ENCODE measurements at regions of chr17 and their contacts with region 1.

Region 1: GRCh38 chr17:38868817-38869525 is 887 bp upstream of the LASP1 start:
- DNase-seq: peak; percentile 88
- H3K4me3 ChIP-seq: peak overlapping the region; percentile 74 to 93 (median 84)
- H3K27ac ChIP-seq: peak overlapping the region; percentile 24
- H3K4me1 ChIP-seq: peaks cover 38% of the 10 kb centered on the region
- H3K27me3 ChIP-seq: no peaks in the 10 kb centered on the region
- CTCF ChIP-seq: peak in 1 of 2 donors; percentile 17
- POLR2A ChIP-seq: no peak

Region 2: GRCh38 chr17:38557836-38558727 is 310.9 kb before region 1 on chr17:
- CTCF ChIA-PET with region 1: no interaction called
- POLR2A ChIA-PET with region 1: no interaction called
- dilution Hi-C with region 1: no loop called
- intact Hi-C with region 1: no loop called
- DNase-seq: peak; percentile 89
- H3K4me3 ChIP-seq: peak overlapping the region in 1 of 3 experiments; percentile 18
- H3K27ac ChIP-seq: no peak overlapping the region
- H3K4me1 ChIP-seq: peaks cover 13% of the 10 kb centered on the region
- H3K27me3 ChIP-seq: peaks cover 45 to 58% of the 10 kb centered on the region in 2 experiments
- CTCF ChIP-seq: peak; percentile 94 to 98
- POLR2A ChIP-seq: no peak

Region 3: GRCh38 chr17:38637951-38638350 is 231.0 kb before region 1 on chr17:
- CTCF ChIA-PET with region 1: no interaction called
- POLR2A ChIA-PET with region 1: no interaction called
- dilution Hi-C with region 1: no loop called
- intact Hi-C with region 1: no loop called
- DNase-seq: no peak
- H3K4me3 ChIP-seq: no peak overlapping the region
- H3K27ac ChIP-seq: no peak overlapping the region
- H3K4me1 ChIP-seq: no peaks in the 10 kb centered on the region
- H3K27me3 ChIP-seq: peaks cover 0 to 9% of the 10 kb centered on the region in 2 experiments
- CTCF ChIP-seq: no peak
- POLR2A ChIP-seq: no peak

Region 4: GRCh38 chr17:38752119-38752929 is 116.6 kb before region 1 on chr17 and contains the start of gene PSMB3:
- CTCF ChIA-PET with region 1: interaction called, 4 read pairs
- POLR2A ChIA-PET with region 1: interaction called, 3 read pairs
- dilution Hi-C with region 1: no loop called
- intact Hi-C with region 1: loop called (anchors 1 kb)
- DNase-seq: peak; percentile 99
- H3K4me3 ChIP-seq: peak within 1 kb of the TSS; percentile 59 to 82 (median 73)
- H3K27ac ChIP-seq: peak within 1 kb of the TSS; percentile 40
- H3K4me1 ChIP-seq: peaks cover 34% of the 10 kb centered on the region
- H3K27me3 ChIP-seq: no peaks in the 10 kb centered on the region
- CTCF ChIP-seq: no peak
- POLR2A ChIP-seq: peak; percentile 3
- total RNA-seq, gene PSMB3: 213 and 227 TPM in 2 replicates

Region 5: GRCh38 chr17:38853292-38854219 is 15.4 kb before region 1 on chr17 and contains the start of gene RPL23:
- CTCF ChIA-PET with region 1: interaction called, 20 read pairs
- POLR2A ChIA-PET with region 1: interaction called, 28 read pairs
- dilution Hi-C with region 1: no loop called
- intact Hi-C with region 1: loop called (anchors 1 kb)
- DNase-seq: peak; percentile 98
- H3K4me3 ChIP-seq: peak within 1 kb of the TSS; percentile 82 to 93 (median 91)
- H3K27ac ChIP-seq: peak within 1 kb of the TSS; percentile 84
- H3K4me1 ChIP-seq: peaks cover 19% of the 10 kb centered on the region
- H3K27me3 ChIP-seq: no peaks in the 10 kb centered on the region
- CTCF ChIP-seq: no peak
- POLR2A ChIP-seq: peak; percentile 97
- total RNA-seq, gene RPL23: 1,270 and 1,292 TPM in 2 replicates

Region 6: GRCh38 chr17:38898812-38899348 is 29.9 kb after region 1 on chr17:
- CTCF ChIA-PET with region 1: interaction called, 18 read pairs
- POLR2A ChIA-PET with region 1: interaction called, 8 read pairs
- dilution Hi-C with region 1: no loop called
- intact Hi-C with region 1: loop called (anchors 1 kb)
- DNase-seq: peak; percentile 41
- H3K4me3 ChIP-seq: no peak overlapping the region
- H3K27ac ChIP-seq: peak overlapping the region; percentile 51
- H3K4me1 ChIP-seq: peaks cover 60% of the 10 kb centered on the region
- H3K27me3 ChIP-seq: no peaks in the 10 kb centered on the region
- CTCF ChIP-seq: no peak
- POLR2A ChIP-seq: no peak

Region 7: GRCh38 chr17:38922538-38923297 is 53.7 kb after region 1 on chr17:
- CTCF ChIA-PET with region 1: interaction called, 10 read pairs
- POLR2A ChIA-PET with region 1: no interaction called
- dilution Hi-C with region 1: no loop called
- intact Hi-C with region 1: no loop called
- DNase-seq: peak; percentile 67
- H3K4me3 ChIP-seq: no peak overlapping the region
- H3K27ac ChIP-seq: no peak overlapping the region
- H3K4me1 ChIP-seq: no peaks in the 10 kb centered on the region
- H3K27me3 ChIP-seq: no peaks in the 10 kb centered on the region
- CTCF ChIP-seq: peak in 1 of 2 donors; percentile 9
- POLR2A ChIP-seq: peak; percentile 16